Activated CD8-positive, alpha-beta T cell treated with anti-CD3 and anti-CD28 coated beads for 36 hours (primary cell): ENCODE measurements at regions of chr3 and their contacts with region 1.

Region 1: DNA sequence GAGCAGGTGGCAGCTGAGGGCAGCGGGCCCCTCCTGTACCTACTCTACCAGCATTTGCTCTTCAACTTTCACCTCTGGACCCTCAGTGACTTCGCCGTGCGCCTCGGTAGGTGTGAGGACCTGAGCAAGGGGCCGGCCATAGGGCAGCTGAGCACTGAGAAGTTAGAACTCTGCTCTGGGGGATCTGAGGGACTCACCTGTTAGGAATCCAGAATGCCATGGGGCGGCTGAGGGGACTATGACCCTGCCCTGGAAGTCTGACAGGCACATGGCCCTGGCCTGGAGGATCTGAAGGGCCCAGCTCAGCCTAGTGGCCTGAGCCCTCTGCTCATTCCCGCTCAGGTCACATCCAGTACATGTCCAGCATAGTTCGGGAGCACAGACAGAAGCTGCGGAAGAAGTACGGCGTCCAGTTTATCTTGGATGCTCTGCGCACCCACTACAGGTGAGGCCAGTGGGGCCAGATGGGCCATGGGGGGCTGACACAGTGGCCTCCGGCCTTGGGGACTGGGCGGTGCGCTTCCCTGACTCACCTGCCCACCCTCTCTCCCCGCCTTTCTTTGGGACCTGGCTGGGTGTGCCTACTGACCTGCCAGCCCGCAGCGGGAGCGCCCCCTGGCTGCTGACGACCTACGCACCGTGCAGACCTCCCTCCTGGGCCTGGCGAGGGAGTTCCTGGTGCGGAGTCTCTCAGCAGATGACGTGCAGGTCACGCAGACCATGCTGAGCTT is 18.8 kb downstream of the NBEAL2 start:
- DNase-seq: peak; percentile 86
- ATAC-seq: peak; percentile 87
- H3K4me3 Mint-ChIP-seq: no peak overlapping the region
- H3K27ac Mint-ChIP-seq: peak overlapping the region; percentile 20
- H3K4me1 Mint-ChIP-seq: peaks cover 21% of the 10 kb centered on the region
- H3K27me3 Mint-ChIP-seq: no peaks in the 10 kb centered on the region
- CTCF ChIP-seq: peak; percentile 89

Region 2: GRCh38 chr3:46851364-46852333 is 146.6 kb before region 1 on chr3:
- CTCF ChIA-PET with region 1: no interaction called
- POLR2A ChIA-PET with region 1: no interaction called
- intact Hi-C with region 1: no loop called
- DNase-seq: peak; percentile 0
- ATAC-seq: no peak
- H3K4me3 Mint-ChIP-seq: no peak overlapping the region
- H3K27ac Mint-ChIP-seq: no peak overlapping the region
- H3K4me1 Mint-ChIP-seq: peaks cover under 1% of the 10 kb centered on the region
- H3K27me3 Mint-ChIP-seq: no peaks in the 10 kb centered on the region
- CTCF ChIP-seq: no peak

Region 3: DNA sequence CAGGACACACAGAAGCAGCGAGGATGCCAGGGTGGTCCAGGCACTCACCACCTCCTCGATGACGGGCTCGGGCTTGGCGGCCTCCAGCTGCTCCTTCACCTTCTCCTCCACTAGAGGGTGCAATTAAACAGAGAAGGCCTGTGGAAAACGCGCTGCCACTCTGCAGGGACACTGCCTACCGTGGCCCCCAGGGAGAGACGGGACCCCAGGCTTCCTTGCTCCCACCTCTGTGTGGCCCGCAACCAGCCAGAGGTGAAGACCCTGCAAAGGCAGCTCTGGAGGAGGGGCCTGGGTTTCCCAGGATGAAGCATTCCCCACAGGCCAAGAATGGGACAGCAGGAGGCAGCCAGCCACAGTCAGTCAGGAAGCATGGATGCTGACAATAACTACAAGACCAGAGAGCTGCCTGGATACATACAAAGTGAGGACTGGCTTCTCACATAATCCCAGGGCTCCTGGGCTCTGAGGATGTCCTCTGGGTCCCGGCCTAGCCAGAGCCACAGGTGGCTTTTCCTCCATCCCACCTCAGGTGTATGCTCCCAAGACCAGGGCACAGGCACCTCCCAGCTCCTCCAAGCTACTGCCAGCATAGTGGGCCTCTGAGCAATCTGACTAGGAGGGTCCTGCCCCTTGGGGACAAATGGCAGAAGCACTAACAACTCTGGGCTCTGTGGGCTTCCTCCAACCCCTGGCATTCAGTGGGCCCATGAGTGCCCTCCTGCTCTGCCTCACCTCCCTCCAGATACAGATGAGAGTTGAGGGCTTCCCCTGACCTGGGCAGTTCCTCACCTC is 74.5 kb before region 1 on chr3:
- CTCF ChIA-PET with region 1: interaction called, 17 read pairs
- POLR2A ChIA-PET with region 1: no interaction called
- intact Hi-C with region 1: loop called (anchors 5 kb)
- DNase-seq: peak; percentile 59
- ATAC-seq: peak; percentile 80
- H3K4me3 Mint-ChIP-seq: no peak overlapping the region
- H3K27ac Mint-ChIP-seq: peak overlapping the region; percentile 67
- H3K4me1 Mint-ChIP-seq: peaks cover 24% of the 10 kb centered on the region
- H3K27me3 Mint-ChIP-seq: no peaks in the 10 kb centered on the region
- CTCF ChIP-seq: peak; percentile 77

Region 4: GRCh38 chr3:46981932-46982471 is 16.3 kb before region 1 on chr3:
- CTCF ChIA-PET with region 1: interaction called, 13 read pairs
- POLR2A ChIA-PET with region 1: interaction called, 6 read pairs
- intact Hi-C with region 1: no loop called
- DNase-seq: no peak
- ATAC-seq: no peak
- H3K4me3 Mint-ChIP-seq: no peak overlapping the region
- H3K27ac Mint-ChIP-seq: no peak overlapping the region
- H3K4me1 Mint-ChIP-seq: peaks cover 64% of the 10 kb centered on the region
- H3K27me3 Mint-ChIP-seq: no peaks in the 10 kb centered on the region
- CTCF ChIP-seq: no peak